Tibial artery (tissue), 4 donors: ENCODE measurements at regions of chr9 and their contacts with region 1.

Region 1: GRCh38 chr9:84953797-84954705 is 284.5 kb downstream of the NTRK2 start:
- DNase-seq: peak; percentile 83 to 88
- H3K4me3 ChIP-seq: no peak overlapping the region
- H3K27ac ChIP-seq: no peak overlapping the region
- H3K4me1 ChIP-seq: peaks cover 0 to 23% (median 9%) of the 10 kb centered on the region in 4 donors
- H3K27me3 ChIP-seq: no peaks in the 10 kb centered on the region
- CTCF ChIP-seq: peak; percentile 94 to 96

Region 2: GRCh38 chr9:84397151-84397728 is 556.8 kb before region 1 on chr9:
- intact Hi-C with region 1: loop called (anchors 10 kb)
- DNase-seq: peak; percentile 57 to 73
- H3K4me3 ChIP-seq: no peak overlapping the region
- H3K27ac ChIP-seq: no peak overlapping the region
- H3K4me1 ChIP-seq: no peaks in the 10 kb centered on the region
- H3K27me3 ChIP-seq: peaks cover 0 to 19% of the 10 kb centered on the region in 2 donors
- CTCF ChIP-seq: peak; percentile 72 to 91

Region 3: DNA sequence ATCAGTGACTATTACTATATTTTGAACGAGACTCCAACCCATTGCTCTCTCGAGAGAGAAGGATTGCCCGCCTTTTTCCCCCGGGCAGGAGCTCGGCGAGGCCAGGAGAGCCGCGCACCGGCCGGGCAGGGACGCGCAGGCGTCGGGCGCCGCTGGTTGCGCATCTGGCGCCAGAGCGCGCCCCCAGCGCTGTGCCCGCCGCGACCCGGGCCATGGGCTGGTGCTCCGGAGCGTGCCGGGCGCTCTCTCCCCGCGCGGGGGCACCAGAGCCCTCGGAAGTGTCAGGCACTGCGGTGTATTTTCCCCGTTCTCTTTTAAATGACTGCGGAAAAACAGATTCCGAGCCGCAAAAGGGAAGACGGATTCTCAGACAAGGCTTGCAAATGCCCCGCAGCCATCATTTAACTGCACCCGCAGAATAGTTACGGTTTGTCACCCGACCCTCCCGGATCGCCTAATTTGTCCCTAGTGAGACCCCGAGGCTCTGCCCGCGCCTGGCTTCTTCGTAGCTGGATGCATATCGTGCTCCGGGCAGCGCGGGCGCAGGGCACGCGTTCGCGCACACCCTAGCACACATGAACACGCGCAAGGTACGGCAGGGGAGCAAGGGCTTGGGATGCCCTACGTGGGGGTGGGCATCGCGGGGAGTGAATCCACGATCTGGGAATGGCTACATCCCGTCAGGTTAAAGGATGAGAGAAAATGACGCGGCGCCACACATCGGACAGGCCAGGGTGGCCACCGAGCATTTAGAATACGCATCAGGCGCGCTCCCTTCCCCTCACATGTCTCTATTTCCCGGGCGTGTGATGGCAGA is 285.6 kb before region 1 on chr9:
- intact Hi-C with region 1: loop called (anchors 5 kb)
- DNase-seq: peak; percentile 72 to 88
- H3K4me3 ChIP-seq: peak overlapping the region; percentile 64 to 91
- H3K27ac ChIP-seq: peak overlapping the region; percentile 91 to 92
- H3K4me1 ChIP-seq: peaks cover 0 to 14% (median 5%) of the 10 kb centered on the region in 4 donors
- H3K27me3 ChIP-seq: no peaks in the 10 kb centered on the region
- CTCF ChIP-seq: peak; percentile 74 to 79

Region 4: DNA sequence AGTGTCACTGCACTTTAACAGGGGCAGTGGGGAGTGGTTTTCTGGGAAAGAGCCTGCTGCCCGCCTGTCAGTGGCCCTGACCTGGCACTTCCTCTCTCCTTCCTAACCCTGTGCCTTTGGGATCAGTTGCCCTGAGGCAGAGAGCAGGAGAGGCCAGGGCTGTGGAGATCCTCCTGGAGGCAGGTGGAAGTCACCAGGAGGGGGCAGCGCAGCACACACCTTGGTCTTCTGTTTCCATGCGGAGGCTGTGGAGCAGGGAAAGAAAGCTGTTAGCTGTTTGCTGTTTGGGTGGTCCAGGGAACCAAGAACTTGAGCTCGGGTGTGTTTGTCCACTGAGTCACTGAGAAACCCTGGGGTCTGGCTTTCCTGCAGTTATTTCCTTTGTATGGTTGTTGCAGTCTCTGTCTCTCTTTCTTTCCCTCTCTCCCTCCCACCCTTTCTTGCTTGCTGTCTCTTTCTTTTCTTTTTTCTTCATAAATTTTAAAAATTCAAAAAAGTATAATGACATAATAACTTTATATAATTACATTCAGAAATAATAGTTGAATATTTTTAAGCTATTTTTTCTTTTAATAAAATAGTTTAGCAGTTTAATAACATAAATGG is 256.4 kb before region 1 on chr9:
- intact Hi-C with region 1: loop called (anchors 2 kb)
- DNase-seq: peak; percentile 64 to 81
- H3K4me3 ChIP-seq: no peak overlapping the region
- H3K27ac ChIP-seq: peak overlapping the region in 1 of 2 donors; percentile 35
- H3K4me1 ChIP-seq: peaks cover 0 to 25% (median 10%) of the 10 kb centered on the region in 4 donors
- H3K27me3 ChIP-seq: no peaks in the 10 kb centered on the region
- CTCF ChIP-seq: peak; percentile 69 to 70

Region 5: DNA sequence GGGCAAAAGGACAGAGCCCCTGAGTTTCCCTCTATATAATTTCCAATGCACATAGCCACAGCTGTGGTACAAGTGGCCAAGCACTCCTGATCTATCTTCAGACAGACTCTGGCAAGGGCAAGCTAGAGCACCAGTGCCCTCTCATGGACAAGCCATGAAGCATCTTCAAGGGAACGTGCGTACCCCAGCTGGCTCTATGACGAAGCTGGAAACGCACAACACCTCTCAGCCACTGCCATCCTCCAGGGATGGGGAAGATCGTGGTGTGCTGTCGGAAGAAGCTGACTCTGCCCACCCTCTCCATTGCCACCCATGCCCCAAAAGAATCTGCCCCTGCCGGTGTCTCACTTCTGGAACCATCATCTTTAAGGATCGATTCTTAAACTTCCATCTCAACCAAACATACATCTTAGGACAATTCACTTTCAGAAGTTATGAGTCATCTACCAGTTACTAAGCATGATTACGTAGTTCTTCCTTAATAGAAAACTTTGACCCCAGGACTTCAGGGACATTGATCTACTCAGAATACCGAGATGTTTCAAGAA is 304.8 kb after region 1 on chr9:
- intact Hi-C with region 1: loop called (anchors 5 kb)
- DNase-seq: peak; percentile 45 to 78
- H3K4me3 ChIP-seq: no peak overlapping the region
- H3K27ac ChIP-seq: no peak overlapping the region
- H3K4me1 ChIP-seq: peaks cover 0 to 3% (median 0%) of the 10 kb centered on the region in 4 donors
- H3K27me3 ChIP-seq: no peaks in the 10 kb centered on the region
- CTCF ChIP-seq: peak; percentile 76 to 78